ENCODE measurements at regions of chr7 and their contacts with region 1.

Region 1: DNA sequence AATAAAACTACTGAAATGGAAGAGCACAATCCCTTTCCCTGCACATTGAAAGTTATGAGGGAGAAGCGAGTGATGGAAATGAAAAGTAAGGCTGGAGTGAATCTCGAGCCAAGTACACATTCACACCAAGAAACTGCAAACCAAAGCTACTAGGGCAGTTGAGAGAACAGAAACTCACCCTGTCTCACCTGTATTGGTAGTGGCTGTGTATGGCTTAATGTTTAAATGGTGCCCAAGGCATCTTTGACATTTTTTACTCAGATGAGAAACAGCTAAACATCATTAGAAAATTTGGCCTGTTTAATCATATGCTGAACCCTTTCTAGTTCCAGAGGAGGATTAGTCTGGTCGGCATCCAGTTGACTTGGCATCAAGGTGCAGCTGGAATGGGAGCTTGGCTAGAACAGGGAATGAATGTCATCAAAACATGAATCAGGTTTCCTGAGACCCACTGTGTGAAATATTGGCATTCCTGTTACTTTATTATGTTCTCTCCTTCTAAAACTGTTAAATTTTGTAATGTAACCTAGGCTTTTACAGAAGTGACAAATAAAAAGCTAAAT is 840.8 kb downstream of the GRM8 start:
- DNase-seq: no peak
- H3K4me3 ChIP-seq: no peak overlapping the region
- H3K4me3 Mint-ChIP-seq: no peak overlapping the region
- H3K27ac ChIP-seq: no peak overlapping the region
- H3K27ac Mint-ChIP-seq: no peak overlapping the region
- H3K4me1 ChIP-seq: no peaks in the 10 kb centered on the region
- H3K4me1 Mint-ChIP-seq: no peaks in the 10 kb centered on the region
- H3K27me3 ChIP-seq: no peaks in the 10 kb centered on the region
- H3K27me3 Mint-ChIP-seq: peaks cover 0 to 1% (median 0%) of the 10 kb centered on the region in 3 donors
- CTCF ChIP-seq: no peak

Region 2: DNA sequence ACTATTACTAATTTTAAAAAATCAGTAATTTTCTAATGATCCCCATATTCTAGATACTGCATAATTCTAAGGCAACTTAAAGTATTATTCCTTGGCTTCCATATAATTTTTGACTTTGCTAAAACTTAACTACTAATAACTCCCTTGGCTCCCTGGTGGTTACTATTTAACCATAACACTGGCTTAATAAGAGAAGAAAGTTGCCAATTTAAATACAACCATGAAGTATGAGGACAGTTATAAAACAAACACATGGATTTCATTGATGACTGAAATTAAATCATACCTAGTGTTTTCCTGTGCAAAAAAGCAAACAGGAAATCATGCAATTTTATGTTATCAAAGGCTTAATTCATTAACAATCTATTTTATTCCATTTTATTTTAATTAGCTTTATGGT is 233.0 kb before region 1 on chr7:
- intact Hi-C with region 1: no loop called
- DNase-seq: no peak
- H3K4me3 ChIP-seq: no peak overlapping the region
- H3K4me3 Mint-ChIP-seq: no peak overlapping the region
- H3K27ac ChIP-seq: no peak overlapping the region
- H3K27ac Mint-ChIP-seq: no peak overlapping the region
- H3K4me1 ChIP-seq: no peaks in the 10 kb centered on the region
- H3K4me1 Mint-ChIP-seq: no peaks in the 10 kb centered on the region
- H3K27me3 ChIP-seq: no peaks in the 10 kb centered on the region
- H3K27me3 Mint-ChIP-seq: no peaks in the 10 kb centered on the region
- CTCF ChIP-seq: no peak

Region 3: GRCh38 chr7:126398851-126399529 is 12.9 kb before region 1 on chr7:
- intact Hi-C with region 1: loop called in 1 of 2 experiments (anchors 1 kb)
- DNase-seq: no peak
- H3K4me3 ChIP-seq: no peak overlapping the region
- H3K4me3 Mint-ChIP-seq: no peak overlapping the region
- H3K27ac ChIP-seq: no peak overlapping the region
- H3K27ac Mint-ChIP-seq: no peak overlapping the region
- H3K4me1 ChIP-seq: no peaks in the 10 kb centered on the region
- H3K4me1 Mint-ChIP-seq: no peaks in the 10 kb centered on the region
- H3K27me3 ChIP-seq: no peaks in the 10 kb centered on the region
- H3K27me3 Mint-ChIP-seq: no peaks in the 10 kb centered on the region
- CTCF ChIP-seq: no peak

Region 4: GRCh38 chr7:126667742-126668366 is 256.0 kb after region 1 on chr7:
- intact Hi-C with region 1: no loop called
- DNase-seq: no peak
- H3K4me3 ChIP-seq: no peak overlapping the region
- H3K4me3 Mint-ChIP-seq: no peak overlapping the region
- H3K27ac ChIP-seq: no peak overlapping the region
- H3K27ac Mint-ChIP-seq: no peak overlapping the region
- H3K4me1 ChIP-seq: no peaks in the 10 kb centered on the region
- H3K4me1 Mint-ChIP-seq: no peaks in the 10 kb centered on the region
- H3K27me3 ChIP-seq: no peaks in the 10 kb centered on the region
- H3K27me3 Mint-ChIP-seq: peaks cover 0 to 2% (median 0%) of the 10 kb centered on the region in 3 donors
- CTCF ChIP-seq: no peak